Activated T-helper 2 cell treated with anti-CD3 and anti-CD28 coated beads, Interferon-gamma antibody, Interleukin-2, Interleukin-4, amounts not matched to agents 10 μg/mL and 5 μg/mL and 100 μg/mL, durations not matched to agents 14 hours and 24 hours and 36 hours (primary cell): ENCODE measurements at regions of chr10 and their contacts with region 1.

Region 1: GRCh38 chr10:50636618-50637579 is 13.1 kb upstream of the SGMS1 start:
- DNase-seq: peak; percentile 35
- H3K4me3 Mint-ChIP-seq: peak overlapping the region; percentile 45
- H3K27ac Mint-ChIP-seq: peak overlapping the region; percentile 35
- H3K4me1 Mint-ChIP-seq: peaks cover 27% of the 10 kb centered on the region
- H3K27me3 Mint-ChIP-seq: peaks cover 72% of the 10 kb centered on the region

Region 2: DNA sequence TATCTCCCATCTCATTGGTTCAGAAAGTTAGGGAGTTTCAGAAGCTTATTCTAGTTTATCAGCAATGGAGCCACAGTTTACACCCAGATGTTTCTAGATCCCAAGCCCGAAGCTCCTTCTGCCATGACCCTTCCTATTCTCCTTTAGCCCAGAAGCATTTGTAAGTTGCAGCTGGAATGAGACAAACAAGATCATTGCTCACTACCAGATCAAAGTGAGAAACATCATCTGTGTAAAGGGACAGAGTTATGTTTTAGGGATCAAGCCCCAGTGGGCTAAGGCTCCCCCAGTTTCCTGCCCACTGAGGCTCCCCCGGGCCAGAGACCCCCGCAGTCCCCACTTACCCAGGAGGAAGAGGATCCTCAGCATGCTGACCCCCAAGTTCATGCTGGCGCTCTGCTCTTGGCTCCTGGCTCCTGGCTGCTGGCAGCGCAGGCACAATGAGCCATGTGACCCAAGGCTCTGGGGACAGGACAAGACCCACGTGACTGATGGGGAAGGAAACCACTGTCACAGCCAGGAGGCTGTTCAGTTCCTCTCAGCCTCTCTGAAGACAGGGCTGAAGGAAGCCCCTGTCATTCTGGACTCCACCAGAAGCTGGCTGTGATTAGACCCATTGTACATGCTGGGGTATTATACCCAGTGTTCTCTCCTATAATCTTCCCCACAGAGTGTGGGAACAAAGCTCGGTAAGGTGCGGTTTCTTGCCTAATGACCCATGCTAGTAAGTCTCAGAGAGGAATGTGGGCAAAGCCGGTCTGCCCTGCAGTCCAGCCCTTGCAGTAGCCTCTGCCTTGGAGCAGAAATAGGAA is 1448.7 kb before region 1 on chr10 and contains the start of gene TMEM273:
- intact Hi-C with region 1: loop called (anchors 10 kb)
- DNase-seq: no peak
- H3K4me3 Mint-ChIP-seq: peak within 1 kb of the TSS; percentile 85
- H3K27ac Mint-ChIP-seq: peak within 1 kb of the TSS; percentile 83
- H3K4me1 Mint-ChIP-seq: peaks cover 77% of the 10 kb centered on the region
- H3K27me3 Mint-ChIP-seq: peaks cover 2% of the 10 kb centered on the region
- total RNA-seq, gene TMEM273: 53.2 and 58.4 TPM in 2 replicates

Region 3: GRCh38 chr10:50325449-50326171 is 311.3 kb before region 1 on chr10:
- intact Hi-C with region 1: loop called (anchors 5 kb)
- DNase-seq: peak; percentile 23
- H3K4me3 Mint-ChIP-seq: peak overlapping the region; percentile 60
- H3K27ac Mint-ChIP-seq: no peak overlapping the region
- H3K4me1 Mint-ChIP-seq: peaks cover 79% of the 10 kb centered on the region
- H3K27me3 Mint-ChIP-seq: no peaks in the 10 kb centered on the region

Region 4: GRCh38 chr10:50431791-50432190 is 205.1 kb before region 1 on chr10:
- intact Hi-C with region 1: loop called (anchors 1 kb)
- DNase-seq: no peak
- H3K4me3 Mint-ChIP-seq: peak overlapping the region; percentile 37
- H3K27ac Mint-ChIP-seq: peak overlapping the region; percentile 76
- H3K4me1 Mint-ChIP-seq: peaks cover 34% of the 10 kb centered on the region
- H3K27me3 Mint-ChIP-seq: peaks cover 8% of the 10 kb centered on the region

Region 5: DNA sequence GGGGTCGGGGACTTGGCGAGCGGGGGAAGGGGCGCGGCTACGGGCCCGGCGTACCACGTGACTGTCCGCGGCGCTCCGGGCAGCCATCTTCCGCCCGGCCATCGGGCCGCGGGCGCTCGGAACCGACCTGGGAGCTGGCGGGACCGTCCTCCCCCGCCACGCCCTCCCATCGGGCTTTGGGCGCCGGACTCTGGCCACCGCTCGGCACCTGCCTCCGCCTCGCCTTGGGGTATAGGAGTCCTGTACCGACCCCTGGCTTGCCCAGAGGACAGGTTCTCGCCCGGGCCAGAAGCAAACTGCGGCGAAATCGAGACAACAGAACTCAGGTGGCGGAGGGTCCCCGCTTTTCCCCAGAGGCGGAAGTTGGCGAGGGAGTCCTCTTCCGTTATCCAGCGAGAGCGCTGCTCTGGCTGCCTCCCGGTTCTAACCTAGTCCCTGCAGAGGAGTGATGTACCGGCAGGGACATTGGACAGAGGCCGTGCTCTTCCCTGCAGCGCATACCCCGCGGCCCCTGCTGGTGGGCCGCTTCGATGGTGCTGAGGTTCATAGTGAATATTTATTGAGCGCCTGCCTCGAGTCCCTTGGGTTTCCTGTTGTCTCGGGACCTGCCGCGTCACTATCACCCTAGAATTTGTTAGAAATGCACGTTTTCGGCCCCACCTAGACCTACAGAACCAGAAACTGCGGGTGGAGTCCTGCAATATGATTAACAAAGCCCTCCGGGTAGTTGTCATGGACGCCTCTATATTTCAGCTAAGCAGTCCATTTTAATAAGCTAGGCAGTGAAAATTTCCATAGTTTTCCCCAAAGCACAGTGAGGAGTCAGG is 11.8 kb before region 1 on chr10:
- intact Hi-C with region 1: loop called (anchors 1 kb)
- DNase-seq: peak; percentile 50
- H3K4me3 Mint-ChIP-seq: peak overlapping the region; percentile 83
- H3K27ac Mint-ChIP-seq: peak overlapping the region; percentile 77
- H3K4me1 Mint-ChIP-seq: peaks cover 36% of the 10 kb centered on the region
- H3K27me3 Mint-ChIP-seq: peaks cover 25% of the 10 kb centered on the region

Region 6: DNA sequence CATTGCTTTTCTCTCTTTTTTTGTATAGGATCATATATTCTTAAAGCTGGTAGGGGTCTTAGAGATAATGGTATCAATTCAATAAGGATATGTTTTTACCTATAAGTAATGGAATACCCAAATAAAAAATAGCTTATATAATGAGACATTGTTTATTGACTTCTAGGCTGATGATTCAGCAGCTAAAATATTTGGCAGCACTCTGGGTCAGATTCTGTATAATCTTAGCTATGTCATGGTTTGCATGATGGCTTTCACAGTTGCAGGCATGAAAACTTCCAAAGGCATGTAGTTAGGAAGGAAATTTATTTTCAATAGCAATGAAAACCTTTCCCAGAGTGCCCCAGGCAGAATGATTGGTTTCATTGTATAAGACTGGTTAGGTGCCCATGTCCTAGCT is 280.6 kb after region 1 on chr10:
- intact Hi-C with region 1: no loop called
- DNase-seq: no peak
- H3K4me3 Mint-ChIP-seq: no peak overlapping the region
- H3K27ac Mint-ChIP-seq: no peak overlapping the region
- H3K4me1 Mint-ChIP-seq: no peaks in the 10 kb centered on the region
- H3K27me3 Mint-ChIP-seq: no peaks in the 10 kb centered on the region